Activated CD4-positive, alpha-beta T cell treated with anti-CD3 and anti-CD28 coated beads, Interleukin-2, amount 10 ng/mL, durations not matched to agents 7 days and 5 days (primary cell): ENCODE measurements at regions of chr10 and their contacts with region 1.

Region 1: DNA sequence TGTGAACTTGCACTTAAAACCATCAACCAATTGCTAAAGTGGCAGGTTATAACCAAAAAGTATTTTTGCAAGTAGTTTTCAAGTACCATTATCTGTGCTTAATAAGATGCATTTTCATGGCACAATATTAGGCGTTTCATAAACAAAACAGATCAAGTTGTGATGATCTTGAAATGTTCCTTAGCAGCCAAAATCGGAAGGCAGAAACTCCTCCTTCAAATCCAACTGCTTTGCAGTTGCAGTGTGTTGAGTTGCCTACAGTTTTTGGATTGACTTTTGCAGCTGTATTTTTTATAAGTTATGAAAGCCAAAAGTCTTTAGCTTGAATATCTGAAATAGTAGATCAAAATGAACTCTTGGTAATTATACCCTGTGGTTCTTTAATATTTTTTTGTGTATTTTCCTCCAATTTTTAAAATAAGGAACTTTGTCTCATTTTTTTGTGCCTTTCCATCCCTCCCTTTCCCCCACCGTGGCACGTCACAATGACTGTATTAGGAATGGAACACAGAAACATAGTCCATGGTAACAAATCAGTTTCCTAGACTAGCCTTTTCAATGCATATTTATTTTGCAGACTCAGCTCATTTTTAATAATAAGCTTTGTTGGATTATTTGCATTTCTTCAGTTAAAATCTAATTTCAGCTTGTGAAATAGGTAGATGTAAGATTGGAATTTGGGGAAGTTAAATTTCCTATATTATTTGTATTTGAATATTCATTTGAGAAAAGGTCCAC is 80.8 kb downstream of the ADD3 start:
- DNase-seq: no peak
- H3K4me3 Mint-ChIP-seq: no peak overlapping the region
- H3K27ac Mint-ChIP-seq: no peak overlapping the region
- H3K4me1 Mint-ChIP-seq: peaks cover 61% of the 10 kb centered on the region
- H3K27me3 Mint-ChIP-seq: no peaks in the 10 kb centered on the region

Region 2: GRCh38 chr10:110035070-110035921 is 53.2 kb before region 1 on chr10:
- CTCF ChIA-PET with region 1: no interaction called
- POLR2A ChIA-PET with region 1: no interaction called
- DNase-seq: no peak
- H3K4me3 Mint-ChIP-seq: no peak overlapping the region
- H3K27ac Mint-ChIP-seq: no peak overlapping the region
- H3K4me1 Mint-ChIP-seq: peaks cover 57% of the 10 kb centered on the region
- H3K27me3 Mint-ChIP-seq: no peaks in the 10 kb centered on the region

Region 3: GRCh38 chr10:110141185-110141584 is 52.6 kb after region 1 on chr10:
- CTCF ChIA-PET with region 1: no interaction called
- POLR2A ChIA-PET with region 1: interaction called, 12 read pairs
- DNase-seq: no peak
- H3K4me3 Mint-ChIP-seq: no peak overlapping the region
- H3K27ac Mint-ChIP-seq: peak overlapping the region; percentile 68
- H3K4me1 Mint-ChIP-seq: peaks cover 36% of the 10 kb centered on the region
- H3K27me3 Mint-ChIP-seq: peaks cover 10% of the 10 kb centered on the region